Gastrocnemius medialis (tissue), 4 donors: ENCODE measurements at regions of chr6 and their contacts with region 1.

Region 1: DNA sequence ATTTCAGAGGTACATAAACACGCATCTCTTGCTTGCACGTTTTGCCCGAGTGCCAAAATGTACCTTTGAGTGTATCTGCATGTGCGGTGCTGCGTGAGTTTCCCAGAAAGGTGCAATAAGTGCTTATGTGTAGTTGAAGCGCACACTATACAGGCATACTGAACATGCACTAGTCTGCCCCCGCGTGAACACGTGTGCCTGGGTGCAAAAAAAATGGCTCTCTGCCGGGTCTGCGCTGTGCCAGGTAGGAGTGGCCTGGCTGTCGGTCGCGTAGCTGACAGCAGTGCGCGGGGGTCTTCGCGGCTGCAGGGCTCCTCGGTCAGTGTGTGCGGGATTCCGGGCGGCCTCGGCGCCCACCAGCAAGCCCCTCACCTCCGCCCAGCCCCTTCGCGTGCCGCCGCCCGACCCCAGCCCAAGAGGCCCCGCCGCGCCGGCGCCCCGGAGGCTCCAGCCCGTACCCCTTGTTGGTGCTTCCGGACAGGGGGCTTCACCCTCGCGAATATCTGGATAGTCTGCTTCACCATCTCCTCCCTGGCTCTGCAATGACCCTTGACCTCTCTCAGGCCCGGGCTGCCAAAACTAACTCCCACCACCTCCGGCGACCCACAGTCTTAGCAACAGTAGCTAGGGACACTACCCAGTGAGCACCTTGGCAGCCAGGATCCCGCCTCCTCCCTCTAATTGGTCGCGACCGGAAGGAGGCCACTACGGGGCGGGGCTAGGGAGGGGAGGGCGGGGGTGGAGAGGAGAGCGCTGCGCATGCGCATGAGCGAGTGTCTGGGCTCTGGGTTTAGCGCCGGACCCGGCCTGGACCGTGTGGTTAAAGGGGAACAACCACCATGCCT is at the start of gene KIF6:
- DNase-seq: peak; percentile 83 to 89
- ATAC-seq: peak; percentile 98 to 99
- H3K4me3 ChIP-seq: peak within 1 kb of the TSS; percentile 72 to 84 (median 75)
- H3K27ac ChIP-seq: peak within 1 kb of the TSS; percentile 50 to 72 (median 58)
- H3K4me1 ChIP-seq: no peaks in the 10 kb centered on the region
- H3K27me3 ChIP-seq: no peaks in the 10 kb centered on the region
- CTCF ChIP-seq: peak in 1 of 5 experiments; percentile 32
- POLR2A ChIP-seq: no peak
- total RNA-seq, gene KIF6: not detected

Region 2: GRCh38 chr6:39772559-39773273 is 47.7 kb after region 1 on chr6:
- in situ Hi-C with region 1: no loop called
- intact Hi-C with region 1: loop called (anchors 2 kb)
- DNase-seq: no peak
- ATAC-seq: no peak
- H3K4me3 ChIP-seq: no peak overlapping the region
- H3K27ac ChIP-seq: no peak overlapping the region
- H3K4me1 ChIP-seq: peaks cover 14 to 16% of the 10 kb centered on the region in 2 donors
- H3K27me3 ChIP-seq: no peaks in the 10 kb centered on the region
- CTCF ChIP-seq: no peak
- POLR2A ChIP-seq: no peak